Naive thymus-derived CD4-positive, alpha-beta T cell (primary cell): ENCODE measurements at regions of chr10 and their contacts with region 1.

Region 1: GRCh38 chr10:49592726-49593563 is 17.2 kb upstream of the SLC18A3 start:
- DNase-seq: peak in 8 of 9 donors; percentile 17 to 60 (median 30)
- ATAC-seq: peak; percentile 81
- H3K4me3 ChIP-seq: no peak overlapping the region
- H3K4me3 Mint-ChIP-seq: no peak overlapping the region
- H3K27ac ChIP-seq: no peak overlapping the region
- H3K27ac Mint-ChIP-seq: no peak overlapping the region
- H3K4me1 ChIP-seq: no peaks in the 10 kb centered on the region
- H3K4me1 Mint-ChIP-seq: peaks cover 0 to 9% (median 4%) of the 10 kb centered on the region in 7 donors
- H3K27me3 ChIP-seq: peaks cover 0 to 3% of the 10 kb centered on the region in 2 donors
- H3K27me3 Mint-ChIP-seq: peaks cover 15 to 28% (median 26%) of the 10 kb centered on the region in 5 donors

Region 2: DNA sequence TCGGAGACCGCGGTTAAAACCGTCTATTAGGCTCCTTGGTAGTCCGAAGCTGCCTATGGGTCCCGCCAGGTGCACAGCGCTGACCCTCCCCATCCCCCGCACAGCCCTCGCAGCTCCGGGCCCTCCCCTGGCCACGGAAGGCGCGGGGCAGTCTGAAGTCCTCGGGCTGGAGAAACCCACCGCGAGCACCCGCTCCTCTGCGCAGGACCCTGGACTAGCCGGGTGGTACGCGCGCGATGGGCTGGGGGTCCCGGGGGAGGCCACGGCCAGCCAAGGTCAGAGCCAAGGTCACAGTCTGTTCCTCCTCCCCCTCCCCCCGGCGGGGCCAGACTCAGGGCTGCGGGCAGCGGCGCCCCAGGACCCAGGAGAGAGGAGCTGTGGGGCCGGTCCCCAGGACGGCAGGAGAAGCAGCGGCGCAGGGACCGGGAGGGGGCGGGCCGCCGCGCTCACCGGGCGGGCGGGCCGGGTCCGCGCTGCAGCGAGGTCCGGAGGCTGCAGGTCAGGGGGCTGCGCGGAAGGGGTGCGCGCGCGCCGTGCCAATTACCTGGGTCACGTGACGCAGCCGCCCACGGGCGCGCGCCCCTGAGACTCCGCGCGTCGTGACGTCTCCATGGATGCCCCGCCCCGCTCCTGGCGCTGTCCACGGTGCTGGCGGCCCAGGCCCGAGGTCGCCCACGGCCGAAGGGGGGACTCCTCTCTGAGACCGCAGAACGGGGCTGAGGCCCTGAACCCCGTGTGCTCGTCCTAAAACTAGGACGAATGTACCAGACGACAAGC is 169.0 kb after region 1 on chr10 and contains the start of gene OGDHL:
- CTCF ChIA-PET with region 1: no interaction called
- POLR2A ChIA-PET with region 1: no interaction called
- intact Hi-C with region 1: loop called in 1 of 2 experiments (anchors 5 kb)
- DNase-seq: peak in 4 of 9 donors; percentile 4 to 81 (median 19)
- ATAC-seq: peak; percentile 52
- H3K4me3 ChIP-seq: no peak within 1 kb of the TSS
- H3K4me3 Mint-ChIP-seq: peak within 1 kb of the TSS; percentile 40 to 71 (median 62)
- H3K27ac ChIP-seq: no peak within 1 kb of the TSS
- H3K27ac Mint-ChIP-seq: no peak within 1 kb of the TSS
- H3K4me1 ChIP-seq: no peaks in the 10 kb centered on the region
- H3K4me1 Mint-ChIP-seq: peaks cover 0 to 8% (median 7%) of the 10 kb centered on the region in 7 donors
- H3K27me3 ChIP-seq: no peaks in the 10 kb centered on the region
- H3K27me3 Mint-ChIP-seq: peaks cover 26 to 81% (median 51%) of the 10 kb centered on the region in 5 donors
- total RNA-seq, gene OGDHL: not detected

Region 3: GRCh38 chr10:50224330-50224952 is 631.5 kb after region 1 on chr10:
- CTCF ChIA-PET with region 1: no interaction called
- POLR2A ChIA-PET with region 1: no interaction called
- intact Hi-C with region 1: loop called in 1 of 2 experiments (anchors 1 kb)
- DNase-seq: peak in 1 of 9 donors; percentile 13
- ATAC-seq: peak; percentile 67
- H3K4me3 ChIP-seq: no peak overlapping the region
- H3K4me3 Mint-ChIP-seq: no peak overlapping the region
- H3K27ac ChIP-seq: no peak overlapping the region
- H3K27ac Mint-ChIP-seq: no peak overlapping the region
- H3K4me1 ChIP-seq: no peaks in the 10 kb centered on the region
- H3K4me1 Mint-ChIP-seq: peaks cover 0 to 3% (median 0%) of the 10 kb centered on the region in 7 donors
- H3K27me3 ChIP-seq: no peaks in the 10 kb centered on the region
- H3K27me3 Mint-ChIP-seq: peaks cover 15 to 35% (median 25%) of the 10 kb centered on the region in 5 donors

Region 4: GRCh38 chr10:50275650-50276235 is 682.8 kb after region 1 on chr10:
- CTCF ChIA-PET with region 1: no interaction called
- POLR2A ChIA-PET with region 1: no interaction called
- intact Hi-C with region 1: loop called in 1 of 2 experiments (anchors 1 kb)
- DNase-seq: peak in 3 of 9 donors; percentile 2 to 29 (median 4)
- ATAC-seq: peak; percentile 46
- H3K4me3 ChIP-seq: no peak overlapping the region
- H3K4me3 Mint-ChIP-seq: no peak overlapping the region
- H3K27ac ChIP-seq: no peak overlapping the region
- H3K27ac Mint-ChIP-seq: no peak overlapping the region
- H3K4me1 ChIP-seq: no peaks in the 10 kb centered on the region
- H3K4me1 Mint-ChIP-seq: no peaks in the 10 kb centered on the region
- H3K27me3 ChIP-seq: peaks cover 0 to 4% of the 10 kb centered on the region in 2 donors
- H3K27me3 Mint-ChIP-seq: peaks cover 18 to 44% (median 24%) of the 10 kb centered on the region in 5 donors